Mammary epithelial cell (primary cell): ENCODE measurements at regions of chr3 and their contacts with region 1.

Region 1: GRCh38 chr3:128975276-128975675 is 18.6 kb downstream of the CFAP92 start:
- DNase-seq: no peak
- H3K4me3 ChIP-seq: no peak overlapping the region
- H3K27ac ChIP-seq: no peak overlapping the region
- H3K4me1 ChIP-seq: no peaks in the 10 kb centered on the region
- H3K27me3 ChIP-seq: no peaks in the 10 kb centered on the region
- CTCF ChIP-seq: no peak

Region 2: DNA sequence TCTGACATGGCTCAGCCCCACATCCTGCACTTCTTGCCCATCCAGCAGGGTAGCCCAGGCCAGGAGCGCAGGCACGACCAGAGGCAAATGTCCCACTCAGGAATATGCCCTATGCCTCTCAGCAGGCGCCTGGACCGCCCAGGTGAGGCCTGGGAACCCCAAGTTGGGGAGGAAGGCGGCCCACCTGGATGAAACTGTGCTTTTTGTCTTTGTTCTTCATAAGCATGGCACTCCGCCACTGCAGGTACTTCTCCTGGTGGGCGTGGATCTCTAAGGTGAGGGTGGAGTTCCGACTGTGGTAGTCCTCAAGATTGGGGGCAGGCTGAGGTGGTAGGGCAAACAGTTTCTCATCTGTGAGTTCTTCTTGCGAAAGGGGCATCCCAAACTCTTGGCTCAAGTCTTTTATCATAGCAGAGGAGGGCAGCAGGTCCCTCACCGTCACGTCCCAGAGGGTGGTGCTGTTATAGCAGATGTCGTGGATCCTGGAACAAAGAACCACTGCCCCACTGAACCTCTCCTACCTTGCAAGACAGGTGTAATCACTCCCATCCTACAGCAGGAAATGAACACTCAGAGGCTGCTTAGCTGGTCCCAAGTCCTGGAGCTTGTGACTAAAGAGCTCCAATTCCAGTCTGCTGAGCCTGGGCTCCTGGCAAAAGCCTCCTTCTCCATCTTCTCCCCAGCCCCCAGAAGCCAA is 42.6 kb before region 1 on chr3:
- CTCF ChIA-PET with region 1: no interaction called
- dilution Hi-C with region 1: loop called (anchors 5 kb)
- in situ Hi-C with region 1: no loop called
- intact Hi-C with region 1: no loop called
- DNase-seq: no peak
- H3K4me3 ChIP-seq: no peak overlapping the region
- H3K27ac ChIP-seq: no peak overlapping the region
- H3K4me1 ChIP-seq: peaks cover 4% of the 10 kb centered on the region
- H3K27me3 ChIP-seq: no peaks in the 10 kb centered on the region
- CTCF ChIP-seq: no peak

Region 3: DNA sequence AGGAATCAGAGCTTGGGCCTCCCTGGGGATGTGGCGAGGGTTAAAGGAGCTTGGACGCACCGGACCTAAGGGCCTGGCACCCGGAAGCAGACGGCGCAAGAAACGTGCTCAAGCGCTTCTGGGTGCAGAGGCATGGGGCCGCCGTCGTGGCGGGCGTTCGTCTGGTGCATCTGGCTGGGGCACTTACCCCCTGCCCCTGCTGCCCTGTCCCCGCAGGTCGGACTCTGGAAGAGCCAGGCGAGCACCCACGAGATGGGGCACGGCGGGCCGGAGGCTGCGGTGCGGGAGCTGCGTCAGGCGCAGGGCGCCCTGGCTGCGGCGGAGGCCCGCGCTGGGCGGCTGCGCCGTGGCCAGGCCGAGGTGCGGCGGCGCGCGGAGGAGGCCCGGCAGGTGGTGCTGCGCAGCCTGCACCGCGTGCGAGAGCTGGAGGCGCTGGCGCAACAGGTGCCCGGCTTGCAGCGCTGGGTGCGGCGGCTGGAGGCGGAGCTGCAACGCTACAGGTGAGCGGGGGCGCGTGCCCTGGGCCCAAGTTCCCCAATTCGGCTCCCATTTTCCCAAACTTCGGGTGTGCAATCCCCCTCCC is 28.4 kb after region 1 on chr3:
- CTCF ChIA-PET with region 1: no interaction called
- dilution Hi-C with region 1: no loop called
- in situ Hi-C with region 1: no loop called
- intact Hi-C with region 1: no loop called
- DNase-seq: peak; percentile 48
- H3K4me3 ChIP-seq: no peak overlapping the region
- H3K27ac ChIP-seq: no peak overlapping the region
- H3K4me1 ChIP-seq: peaks cover 16% of the 10 kb centered on the region
- H3K27me3 ChIP-seq: peaks cover 34% of the 10 kb centered on the region
- CTCF ChIP-seq: peak in 1 of 2 donors; percentile 39

Region 4: DNA sequence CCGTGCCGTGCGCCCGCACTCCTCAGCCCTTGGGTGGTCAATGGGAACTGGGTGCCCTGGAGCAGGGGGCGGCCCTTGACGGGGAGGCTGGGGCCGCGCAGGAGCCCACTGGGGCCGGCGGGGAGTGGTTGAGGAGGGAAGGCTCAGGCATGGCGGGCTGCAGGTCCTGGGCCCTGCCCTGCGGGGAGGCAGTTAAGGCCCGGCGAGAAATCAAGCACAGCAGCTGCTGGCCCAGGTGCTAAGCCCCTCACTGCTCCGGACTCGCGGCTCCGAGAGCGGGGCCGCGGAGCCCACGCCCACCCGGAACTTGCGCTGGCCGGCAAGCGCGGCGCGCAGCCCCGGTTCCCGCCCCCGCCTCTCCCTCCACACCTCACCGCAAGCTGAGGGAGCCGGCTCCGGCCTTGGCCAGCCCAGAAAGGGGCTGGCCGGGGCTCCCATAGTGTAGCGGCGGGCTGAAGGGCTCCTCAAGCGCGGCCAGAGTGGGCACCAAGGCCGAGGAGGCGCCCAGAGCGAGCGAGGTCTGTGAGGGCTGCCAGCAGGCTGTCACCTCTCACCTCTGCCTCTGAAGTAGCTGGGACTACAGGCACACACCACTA is 93.1 kb after region 1 on chr3:
- CTCF ChIA-PET with region 1: no interaction called
- dilution Hi-C with region 1: loop called (anchors 5 kb)
- in situ Hi-C with region 1: no loop called
- intact Hi-C with region 1: no loop called
- DNase-seq: no peak
- H3K4me3 ChIP-seq: peak overlapping the region in 2 of 3 experiments; percentile 11 to 31
- H3K27ac ChIP-seq: no peak overlapping the region
- H3K4me1 ChIP-seq: peaks cover 7% of the 10 kb centered on the region
- H3K27me3 ChIP-seq: no peaks in the 10 kb centered on the region
- CTCF ChIP-seq: no peak